Activated naive CD4-positive, alpha-beta T cell treated with anti-CD3 and anti-CD28 coated beads for 36 hours (primary cell): ENCODE measurements at regions of chr2 and their contacts with region 1.

Region 1: DNA sequence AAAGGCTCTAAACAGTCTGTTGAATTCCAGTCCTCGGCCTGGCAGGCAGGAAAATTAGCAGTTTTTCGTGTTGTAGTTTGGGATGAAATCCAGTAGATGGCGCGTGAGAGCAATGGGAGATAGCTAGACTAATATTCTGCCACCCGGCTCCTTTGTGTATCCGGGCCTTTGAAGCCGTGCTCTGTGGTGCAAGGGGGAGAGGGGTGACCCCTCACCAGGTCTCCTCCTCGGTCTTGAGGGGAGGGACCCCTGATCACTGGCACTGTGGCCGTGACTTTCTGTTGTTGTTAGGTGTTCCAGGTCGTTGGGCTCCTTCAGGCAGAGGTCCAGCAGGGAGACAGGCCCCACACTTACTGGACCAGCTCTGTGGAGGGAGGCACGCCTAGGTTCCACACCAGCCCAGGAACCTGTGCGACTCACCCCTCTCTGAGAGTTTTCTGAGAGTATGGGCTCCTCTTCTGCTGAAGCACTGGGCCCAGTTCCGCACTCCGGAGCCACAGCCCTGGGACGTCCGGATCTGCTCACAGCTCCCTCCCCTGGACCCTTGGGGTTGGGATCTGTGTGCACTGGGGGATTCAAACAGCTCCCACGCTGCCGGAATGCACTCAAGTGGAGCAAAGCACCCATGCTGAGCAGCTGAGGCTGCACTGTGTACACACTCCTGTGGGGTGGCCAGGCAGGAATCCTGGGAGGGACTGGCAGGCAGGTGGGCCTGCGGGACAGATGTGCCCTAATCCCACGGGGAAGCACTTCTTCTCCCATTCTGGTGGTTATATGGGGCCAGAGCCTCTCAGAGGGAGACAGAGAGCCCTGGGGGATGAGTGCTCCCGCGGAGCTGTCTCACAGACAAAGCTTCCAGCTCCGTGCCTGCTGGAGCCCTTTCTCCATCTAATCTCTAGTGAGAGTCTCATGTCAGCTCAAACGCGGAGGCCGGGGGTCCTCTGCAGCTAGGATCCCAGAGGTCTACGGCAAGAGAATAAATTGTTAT is 8.8 kb downstream of the GKN2 start:
- DNase-seq: peak; percentile 74
- H3K4me3 Mint-ChIP-seq: no peak overlapping the region
- H3K27ac Mint-ChIP-seq: no peak overlapping the region
- H3K4me1 Mint-ChIP-seq: no peaks in the 10 kb centered on the region
- H3K27me3 Mint-ChIP-seq: peaks cover 3% of the 10 kb centered on the region

Region 2: GRCh38 chr2:69306822-69307578 is 363.1 kb after region 1 on chr2:
- CTCF ChIA-PET with region 1: interaction called, 8 read pairs
- intact Hi-C with region 1: loop called (anchors 1 kb)
- DNase-seq: peak; percentile 76
- H3K4me3 Mint-ChIP-seq: peak overlapping the region; percentile 67
- H3K27ac Mint-ChIP-seq: no peak overlapping the region
- H3K4me1 Mint-ChIP-seq: peaks cover 2% of the 10 kb centered on the region
- H3K27me3 Mint-ChIP-seq: peaks cover 20% of the 10 kb centered on the region